ENCODE measurements at regions of chr11 and their contacts with region 1.

Region 1: DNA sequence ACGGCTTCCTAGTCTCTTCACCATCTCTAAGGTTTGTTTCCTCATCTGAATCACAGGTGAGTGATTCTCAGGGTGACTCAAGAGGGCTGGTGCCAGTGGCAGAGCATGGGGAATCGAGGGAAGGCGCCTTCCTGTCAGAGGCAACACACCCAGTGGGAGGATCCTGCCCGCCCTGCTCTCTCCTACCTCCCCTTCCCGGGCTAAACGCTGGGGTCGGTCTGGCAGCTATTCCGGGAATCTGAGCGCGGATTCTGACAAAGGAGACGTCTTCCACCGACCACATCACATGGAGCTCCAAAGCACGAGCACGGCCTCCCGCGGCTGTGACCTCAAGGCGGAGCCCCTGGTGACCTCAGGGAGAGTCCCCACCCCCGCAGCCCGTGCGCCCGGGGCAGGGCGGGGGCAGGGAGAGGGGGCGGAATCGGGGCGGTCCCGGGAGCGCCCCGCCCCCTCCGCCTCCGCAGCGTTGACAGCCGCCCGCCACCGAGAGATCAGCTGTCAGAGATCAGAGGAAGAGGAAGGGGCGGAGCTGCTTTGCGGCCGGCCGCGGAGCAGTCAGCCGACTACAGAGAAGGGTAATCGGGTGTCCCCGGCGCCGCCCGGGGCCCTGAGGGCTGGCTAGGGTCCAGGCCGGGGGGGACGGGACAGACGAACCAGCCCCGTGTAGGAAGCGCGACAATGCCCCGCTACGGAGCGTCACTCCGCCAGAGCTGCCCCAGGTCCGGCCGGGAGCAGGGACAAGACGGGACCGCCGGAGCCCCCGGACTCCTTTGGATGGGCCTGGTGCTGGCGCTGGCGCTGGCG is at the start of gene SMPD1:
- DNase-seq: peak; percentile 84
- H3K4me3 ChIP-seq: peak within 1 kb of the TSS; percentile 83
- H3K27ac ChIP-seq: peak within 1 kb of the TSS; percentile 47
- H3K4me1 ChIP-seq: peaks cover 12% of the 10 kb centered on the region
- H3K27me3 ChIP-seq: no peaks in the 10 kb centered on the region
- total RNA-seq, gene SMPD1: 70.1 and 87.8 TPM in 2 replicates

Region 2: GRCh38 chr11:6443269-6444003 is 53.3 kb after region 1 on chr11:
- in situ Hi-C with region 1: loop called (anchors 10 kb)
- DNase-seq: peak; percentile 78
- H3K4me3 ChIP-seq: no peak overlapping the region
- H3K27ac ChIP-seq: no peak overlapping the region
- H3K4me1 ChIP-seq: no peaks in the 10 kb centered on the region
- H3K27me3 ChIP-seq: no peaks in the 10 kb centered on the region